HepG2 (cell line): ENCODE measurements at regions of chr2 and their contacts with region 1.

Region 1: DNA sequence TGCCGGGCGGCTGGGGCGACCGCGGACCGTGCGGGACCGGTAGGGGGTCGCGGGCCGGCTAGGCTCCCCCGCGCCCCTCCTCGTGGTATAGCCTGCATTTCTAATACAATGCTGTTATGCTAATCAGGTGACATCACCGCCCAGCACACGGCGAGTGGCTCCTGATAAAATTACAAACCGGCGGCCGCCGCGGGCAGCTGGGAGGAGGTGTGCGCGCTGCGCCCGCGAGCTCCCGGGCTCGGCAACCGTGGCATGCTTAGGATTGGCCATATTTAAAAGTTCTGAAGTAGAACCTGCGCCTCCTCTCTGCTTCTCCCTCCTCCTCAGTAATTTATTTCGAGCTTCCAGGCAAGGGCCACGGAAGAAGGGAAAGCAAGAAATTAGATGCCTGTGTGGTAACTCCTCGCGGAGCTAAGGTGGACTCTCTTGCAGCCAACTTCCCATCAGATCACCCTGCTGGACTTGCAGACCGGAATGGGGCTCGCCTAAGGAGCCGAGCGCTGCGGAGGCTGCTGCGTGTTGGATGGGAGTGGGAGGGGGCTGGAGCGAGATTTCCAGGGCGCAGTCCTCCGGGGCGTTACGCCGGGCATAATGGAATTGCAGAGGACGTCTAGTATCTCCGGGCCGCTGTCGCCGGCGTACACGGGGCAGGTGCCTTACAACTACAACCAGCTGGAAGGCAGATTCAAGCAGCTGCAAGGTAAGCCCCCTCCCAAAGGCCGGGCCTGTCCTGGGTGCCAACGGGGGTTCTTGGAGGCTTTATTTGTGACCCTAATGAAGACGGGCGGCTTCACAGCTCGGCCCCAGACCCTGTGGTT is 102.3 kb downstream of the SPTBN1 start:
- DNase-seq: peak; percentile 78
- ATAC-seq: peak; percentile 72
- H3K4me3 ChIP-seq: peak overlapping the region; percentile 86 to 99 (median 91)
- H3K27ac ChIP-seq: peak overlapping the region; percentile 93
- H3K4me1 ChIP-seq: peaks cover 67% of the 10 kb centered on the region
- H3K27me3 ChIP-seq: no peaks in the 10 kb centered on the region; a peak in 1 of 5 replicates
- CTCF ChIP-seq: peak; percentile 21; the same call in 1 of the 2 replicates
- EP300 ChIP-seq: no peak
- POLR2A ChIP-seq: peak; percentile 17 to 76; a peak in 3 of 4 replicates
- RAD21 ChIP-seq: no peak

Region 2: DNA sequence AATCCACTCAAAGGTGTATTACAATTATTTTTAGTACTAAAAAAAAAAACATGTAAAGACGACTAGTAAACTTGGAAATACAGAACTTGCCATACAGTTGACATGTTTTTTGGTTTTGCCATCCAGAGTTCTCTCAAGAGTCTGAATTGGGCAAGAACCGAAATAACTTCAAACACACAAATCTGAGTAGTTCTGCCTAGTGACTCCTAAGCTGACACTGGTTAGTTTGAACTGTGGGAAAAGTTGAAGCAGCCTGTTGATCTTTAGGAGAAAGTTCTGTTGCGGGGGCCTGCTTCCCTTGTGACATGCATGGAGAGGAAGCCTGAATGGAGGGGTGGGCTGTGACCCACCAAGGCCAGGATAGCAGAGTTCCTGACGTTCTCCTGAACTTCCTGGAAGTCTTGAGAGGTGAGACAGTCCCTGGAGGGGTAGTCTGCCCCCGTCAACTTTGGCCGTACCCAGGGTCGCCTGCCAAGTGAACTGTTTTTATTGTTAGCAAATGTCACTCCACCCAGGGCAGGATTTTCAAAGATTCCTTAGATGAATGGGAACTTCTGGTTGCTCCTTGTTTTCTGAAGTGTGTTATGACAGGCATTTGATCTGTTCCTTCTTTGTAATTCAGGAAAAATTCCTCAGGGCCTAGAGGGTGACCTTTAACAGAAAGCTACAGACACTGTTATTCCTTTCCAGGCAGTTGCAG is 187.8 kb before region 1 on chr2:
- CTCF ChIA-PET with region 1: no interaction called
- POLR2A ChIA-PET with region 1: no interaction called
- in situ Hi-C with region 1: no loop called
- intact Hi-C with region 1: no loop called
- DNase-seq: no peak
- ATAC-seq: peak; percentile 64
- H3K4me3 ChIP-seq: peak overlapping the region in 2 of 3 experiments; percentile 13 to 39; a peak in 3 of 6 replicates
- H3K27ac ChIP-seq: no peak overlapping the region
- H3K4me1 ChIP-seq: peaks cover 23% of the 10 kb centered on the region
- H3K27me3 ChIP-seq: peaks cover 1 to 42% of the 10 kb centered on the region in 2 experiments; a peak in 2 of 5 replicates
- CTCF ChIP-seq: no peak
- EP300 ChIP-seq: no peak
- POLR2A ChIP-seq: no peak
- RAD21 ChIP-seq: no peak

Region 3: DNA sequence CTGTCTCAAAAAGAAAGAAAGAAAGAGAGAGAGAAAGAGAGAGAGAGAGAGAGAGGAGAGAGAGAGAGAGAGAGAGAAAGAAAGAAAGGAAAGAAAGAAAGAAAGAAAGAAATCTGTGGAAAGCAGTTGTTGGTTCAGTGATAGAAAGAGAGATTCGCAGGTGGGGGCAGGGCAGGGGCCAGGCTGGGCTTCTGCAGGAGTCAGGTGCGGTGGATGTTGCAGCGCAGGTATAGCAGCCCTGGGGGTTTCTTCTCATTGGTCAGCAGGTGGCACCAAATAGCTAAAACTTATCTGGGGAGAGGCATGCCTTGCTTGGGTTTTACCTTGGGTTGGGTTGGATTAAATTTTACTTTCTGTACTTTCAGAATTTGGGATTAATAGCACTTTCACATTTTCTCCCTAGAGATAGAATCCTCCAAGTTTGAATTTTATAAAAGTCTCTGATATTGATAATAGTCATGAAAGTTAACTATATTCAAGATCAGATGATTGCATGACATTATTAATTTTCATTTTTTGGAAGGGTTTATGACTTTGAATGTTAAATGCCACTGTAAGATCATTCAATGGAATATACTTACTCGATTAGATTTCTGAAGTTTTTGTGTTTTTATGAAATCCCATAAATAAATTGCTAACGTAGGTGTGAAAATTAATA is 35.6 kb before region 1 on chr2:
- CTCF ChIA-PET with region 1: interaction called, 7 read pairs
- POLR2A ChIA-PET with region 1: interaction called, 19 read pairs
- in situ Hi-C with region 1: no loop called
- intact Hi-C with region 1: loop called (anchors 2 kb)
- DNase-seq: peak; percentile 86
- ATAC-seq: peak; percentile 98
- H3K4me3 ChIP-seq: no peak overlapping the region
- H3K27ac ChIP-seq: no peak overlapping the region
- H3K4me1 ChIP-seq: peaks cover 15% of the 10 kb centered on the region
- H3K27me3 ChIP-seq: no peaks in the 10 kb centered on the region
- CTCF ChIP-seq: peak; percentile 90
- EP300 ChIP-seq: no peak
- POLR2A ChIP-seq: no peak
- RAD21 ChIP-seq: peak; percentile 96

Region 4: DNA sequence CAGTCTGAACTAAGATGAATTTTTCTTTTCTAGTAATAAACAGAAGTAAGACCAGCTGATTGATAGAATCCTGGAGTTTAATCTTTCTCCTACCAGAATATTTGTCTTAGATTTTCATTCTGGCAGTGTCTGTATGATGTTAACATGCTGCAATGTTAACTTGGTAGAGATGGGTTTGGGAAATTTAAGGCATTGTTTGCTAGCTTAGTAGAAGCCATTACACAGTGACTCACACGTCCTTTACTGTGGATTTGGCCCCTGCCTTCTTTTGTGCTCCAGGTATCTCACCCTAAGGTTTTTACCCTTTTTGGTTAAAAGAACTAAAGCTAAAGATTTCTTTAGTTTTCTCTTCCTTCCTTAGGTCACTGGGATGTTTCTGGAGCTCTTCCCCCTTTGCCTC is 18.2 kb before region 1 on chr2:
- CTCF ChIA-PET with region 1: no interaction called
- POLR2A ChIA-PET with region 1: interaction called, 25 read pairs
- in situ Hi-C with region 1: no loop called
- intact Hi-C with region 1: loop called (anchors 1 kb)
- DNase-seq: no peak
- ATAC-seq: peak; percentile 29; the same call in 2 of the 3 replicates
- H3K4me3 ChIP-seq: no peak overlapping the region
- H3K27ac ChIP-seq: no peak overlapping the region
- H3K4me1 ChIP-seq: peaks cover 30% of the 10 kb centered on the region
- H3K27me3 ChIP-seq: no peaks in the 10 kb centered on the region
- CTCF ChIP-seq: no peak
- EP300 ChIP-seq: no peak
- POLR2A ChIP-seq: no peak
- RAD21 ChIP-seq: no peak

Region 5: GRCh38 chr2:54570925-54571694 is 12.7 kb after region 1 on chr2:
- CTCF ChIA-PET with region 1: no interaction called
- POLR2A ChIA-PET with region 1: interaction called, 108 read pairs
- in situ Hi-C with region 1: no loop called
- intact Hi-C with region 1: loop called (anchors 1 kb)
- DNase-seq: peak; percentile 79
- ATAC-seq: peak; percentile 69
- H3K4me3 ChIP-seq: peak overlapping the region in 2 of 3 experiments; percentile 17 to 20; a peak in 1 of 6 replicates
- H3K27ac ChIP-seq: peak overlapping the region; percentile 76
- H3K4me1 ChIP-seq: peaks cover 98% of the 10 kb centered on the region
- H3K27me3 ChIP-seq: no peaks in the 10 kb centered on the region
- CTCF ChIP-seq: no peak
- EP300 ChIP-seq: 0 out of 4 replicates have a peak, but pooled peaks of 1 of the 2 experiments have one; percentile 20
- POLR2A ChIP-seq: no peak
- RAD21 ChIP-seq: no peak

Region 6: GRCh38 chr2:54589340-54590215 is 31.2 kb after region 1 on chr2:
- CTCF ChIA-PET with region 1: no interaction called
- POLR2A ChIA-PET with region 1: interaction called, 42 read pairs
- in situ Hi-C with region 1: no loop called
- intact Hi-C with region 1: loop called (anchors 1 kb)
- DNase-seq: peak; percentile 98
- ATAC-seq: peak; percentile 91
- H3K4me3 ChIP-seq: peak overlapping the region; percentile 22 to 55 (median 28)
- H3K27ac ChIP-seq: peak overlapping the region; percentile 92
- H3K4me1 ChIP-seq: peaks cover 90% of the 10 kb centered on the region
- H3K27me3 ChIP-seq: no peaks in the 10 kb centered on the region
- CTCF ChIP-seq: no peak
- EP300 ChIP-seq: peak; percentile 71 to 84
- POLR2A ChIP-seq: peak; percentile 39 to 57; a peak in 3 of 4 replicates
- RAD21 ChIP-seq: no peak

Region 7: DNA sequence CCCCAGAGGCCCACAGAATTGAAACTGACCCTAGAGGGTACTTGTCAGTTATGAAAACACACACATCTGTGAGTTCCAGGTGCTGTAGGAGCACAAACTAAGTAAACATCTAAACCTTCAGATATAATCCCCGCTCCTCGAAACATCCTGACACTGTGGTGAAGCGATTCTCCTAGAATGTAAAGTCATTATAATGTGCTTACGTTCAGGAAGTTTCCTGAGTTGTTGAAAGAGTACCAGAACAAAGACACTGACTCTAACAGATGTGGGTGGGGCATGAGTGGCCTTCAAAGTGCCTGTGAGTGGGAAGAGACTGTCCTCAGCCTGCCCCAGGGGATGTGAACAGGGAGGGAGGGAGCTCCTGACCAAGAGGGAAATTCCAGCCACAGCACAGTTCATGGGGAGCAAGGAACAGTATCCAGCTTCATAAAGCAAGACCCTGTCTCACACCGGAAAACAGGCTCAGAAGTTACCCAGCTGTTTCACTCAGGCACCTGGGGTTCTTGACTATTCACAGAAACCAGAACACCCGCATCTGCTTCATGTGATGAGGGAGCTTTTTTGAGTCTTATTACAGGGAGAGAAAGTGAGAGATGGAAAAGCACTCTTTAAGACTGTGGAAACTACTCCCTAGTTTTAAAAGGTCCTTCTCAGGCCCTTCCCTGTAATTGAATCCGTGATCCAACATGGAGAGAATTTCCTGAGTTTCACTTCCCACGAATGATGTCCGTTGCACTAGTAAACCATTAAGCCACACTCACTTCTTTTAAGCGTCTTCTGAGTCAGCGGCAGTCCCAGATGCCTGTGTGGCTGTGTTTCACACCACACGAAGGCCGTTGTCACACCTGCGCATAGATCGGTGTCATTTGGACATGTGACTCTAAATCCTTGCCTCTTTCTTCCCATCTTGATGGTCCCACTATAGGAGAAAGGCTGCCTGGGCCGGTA is 76.4 kb after region 1 on chr2:
- CTCF ChIA-PET with region 1: no interaction called
- POLR2A ChIA-PET with region 1: interaction called, 4 read pairs
- in situ Hi-C with region 1: no loop called
- intact Hi-C with region 1: loop called (anchors 5 kb)
- DNase-seq: no peak
- ATAC-seq: peak; percentile 24
- H3K4me3 ChIP-seq: no peak overlapping the region
- H3K27ac ChIP-seq: no peak overlapping the region
- H3K4me1 ChIP-seq: peaks cover 37% of the 10 kb centered on the region
- H3K27me3 ChIP-seq: no peaks in the 10 kb centered on the region
- CTCF ChIP-seq: no peak
- EP300 ChIP-seq: no peak
- POLR2A ChIP-seq: peak in 1 of 2 experiments; percentile 27; a peak in 1 of 4 replicates
- RAD21 ChIP-seq: no peak